A549 (cell line): ENCODE measurements at regions of chr9 and their contacts with region 1.

Region 1: DNA sequence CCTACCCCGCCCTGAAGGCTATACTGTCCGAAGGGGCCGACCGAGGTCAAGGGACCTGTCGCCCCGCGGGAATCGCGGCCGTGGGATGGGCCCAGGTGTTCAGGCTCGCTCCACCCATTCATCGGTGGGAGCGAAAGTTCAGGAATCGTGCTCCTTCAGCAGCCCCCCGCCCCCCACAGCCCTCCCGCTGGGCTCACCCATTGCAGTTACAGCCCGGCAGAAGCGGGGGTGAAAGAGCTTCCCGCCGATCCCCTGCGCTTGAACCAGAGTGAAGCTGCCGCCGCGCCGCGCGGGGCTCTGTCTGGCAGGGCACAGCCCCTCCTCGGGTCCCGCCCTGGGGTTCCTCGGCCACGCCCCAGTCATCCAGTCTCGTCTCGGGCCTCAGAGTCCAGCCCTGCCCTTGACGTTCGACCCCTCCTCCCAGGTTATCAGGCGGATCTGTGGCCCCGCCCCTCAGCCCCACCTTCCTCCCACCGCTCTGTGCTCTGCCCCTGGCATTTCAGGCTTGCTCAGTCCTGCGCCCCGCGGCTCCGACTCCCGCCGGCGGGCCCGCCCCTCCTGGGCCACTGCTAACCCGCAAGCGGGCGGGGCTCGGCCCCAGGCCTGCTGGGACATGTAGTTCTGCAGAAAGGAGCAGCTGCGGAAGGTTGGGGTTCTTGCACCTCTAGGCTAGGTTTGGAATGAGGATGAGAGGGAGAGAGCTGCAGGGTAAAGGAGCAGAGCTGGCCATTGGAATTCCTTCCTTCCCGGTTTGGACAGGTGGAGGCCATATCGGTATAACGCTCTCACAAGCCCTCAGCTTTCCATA is at the start of gene MYORG:
- DNase-seq: peak; percentile 96 to 98
- ATAC-seq: peak; percentile 78 to 89
- H3K4me3 ChIP-seq: peak within 1 kb of the TSS; percentile 79
- H3K27ac ChIP-seq: peak within 1 kb of the TSS; percentile 63 to 85
- H3K4me1 ChIP-seq: peaks cover 30% of the 10 kb centered on the region
- CTCF ChIP-seq: no peak
- EP300 ChIP-seq: no peak
- POLR2A ChIP-seq: peak; percentile 50
- RAD21 ChIP-seq: no peak
- polyA plus RNA-seq, gene MYORG: 2.2 and 3.7 TPM in 2 replicates

Region 2: DNA sequence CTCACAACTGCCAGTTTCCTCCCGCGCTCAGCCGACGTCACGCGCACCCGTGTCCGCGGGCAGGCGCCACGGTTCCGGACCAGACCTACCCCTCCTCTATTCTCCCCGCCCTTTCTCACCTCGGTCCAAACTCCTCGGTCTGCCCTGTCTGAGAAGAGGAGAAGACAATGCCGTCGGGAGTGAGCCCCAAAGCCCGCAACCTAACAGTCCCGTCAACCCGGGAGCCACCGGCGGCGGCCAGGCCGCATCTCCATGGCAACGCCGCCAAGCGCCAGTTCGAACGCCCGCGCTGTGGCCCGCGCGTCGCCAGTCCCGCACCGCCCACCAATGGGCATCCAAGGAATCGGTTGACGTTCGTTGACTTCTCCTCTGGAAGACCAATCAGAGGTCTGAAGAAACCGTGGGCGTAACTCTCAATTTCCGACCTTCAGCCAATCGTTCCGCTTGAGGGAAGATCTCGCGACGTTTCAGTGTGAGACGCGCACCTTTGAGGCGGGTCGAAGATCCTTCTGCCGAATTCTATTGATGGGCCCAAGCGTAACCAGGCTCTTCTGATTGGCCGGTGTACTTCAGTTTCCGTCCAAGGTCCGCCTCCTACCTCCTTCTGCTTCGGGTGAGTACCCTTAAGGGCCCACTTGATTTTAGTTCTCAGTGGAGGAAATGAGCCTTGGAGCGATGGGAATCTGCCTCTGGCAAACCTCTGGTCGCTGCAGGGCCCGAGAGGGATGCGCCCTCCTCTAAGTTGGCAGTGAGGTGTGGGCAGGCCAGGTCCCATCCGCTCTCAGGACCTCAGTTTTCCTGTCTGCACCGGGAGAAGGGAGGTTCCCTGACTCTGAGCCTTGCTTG is 47.6 kb before region 1 on chr9 and contains the starts of genes KIF24 and NUDT2:
- CTCF ChIA-PET with region 1: interaction called, 417 read pairs
- POLR2A ChIA-PET with region 1: interaction called, 5 read pairs
- DNase-seq: peak; percentile 96 to 100
- ATAC-seq: peak; percentile 94 to 97
- H3K4me3 ChIP-seq: peak within 1 kb of the TSS; percentile 97
- H3K27ac ChIP-seq: peak within 1 kb of the TSS; percentile 92 to 95
- H3K4me1 ChIP-seq: peaks cover 20% of the 10 kb centered on the region
- CTCF ChIP-seq: no peak
- EP300 ChIP-seq: no peak
- POLR2A ChIP-seq: peak; percentile 77
- RAD21 ChIP-seq: no peak
- polyA plus RNA-seq, gene KIF24: 4.3 and 4.4 TPM in 2 replicates
- polyA plus RNA-seq, gene NUDT2: 26.4 and 26.8 TPM in 2 replicates

Region 3: GRCh38 chr9:34363619-34364351 is 13.0 kb before region 1 on chr9:
- CTCF ChIA-PET with region 1: interaction called, 106 read pairs
- POLR2A ChIA-PET with region 1: interaction called, 4 read pairs
- DNase-seq: no peak
- ATAC-seq: no peak
- H3K4me3 ChIP-seq: no peak overlapping the region
- H3K27ac ChIP-seq: no peak overlapping the region
- H3K4me1 ChIP-seq: no peaks in the 10 kb centered on the region
- CTCF ChIP-seq: no peak
- EP300 ChIP-seq: no peak
- POLR2A ChIP-seq: no peak
- RAD21 ChIP-seq: no peak

Region 4: DNA sequence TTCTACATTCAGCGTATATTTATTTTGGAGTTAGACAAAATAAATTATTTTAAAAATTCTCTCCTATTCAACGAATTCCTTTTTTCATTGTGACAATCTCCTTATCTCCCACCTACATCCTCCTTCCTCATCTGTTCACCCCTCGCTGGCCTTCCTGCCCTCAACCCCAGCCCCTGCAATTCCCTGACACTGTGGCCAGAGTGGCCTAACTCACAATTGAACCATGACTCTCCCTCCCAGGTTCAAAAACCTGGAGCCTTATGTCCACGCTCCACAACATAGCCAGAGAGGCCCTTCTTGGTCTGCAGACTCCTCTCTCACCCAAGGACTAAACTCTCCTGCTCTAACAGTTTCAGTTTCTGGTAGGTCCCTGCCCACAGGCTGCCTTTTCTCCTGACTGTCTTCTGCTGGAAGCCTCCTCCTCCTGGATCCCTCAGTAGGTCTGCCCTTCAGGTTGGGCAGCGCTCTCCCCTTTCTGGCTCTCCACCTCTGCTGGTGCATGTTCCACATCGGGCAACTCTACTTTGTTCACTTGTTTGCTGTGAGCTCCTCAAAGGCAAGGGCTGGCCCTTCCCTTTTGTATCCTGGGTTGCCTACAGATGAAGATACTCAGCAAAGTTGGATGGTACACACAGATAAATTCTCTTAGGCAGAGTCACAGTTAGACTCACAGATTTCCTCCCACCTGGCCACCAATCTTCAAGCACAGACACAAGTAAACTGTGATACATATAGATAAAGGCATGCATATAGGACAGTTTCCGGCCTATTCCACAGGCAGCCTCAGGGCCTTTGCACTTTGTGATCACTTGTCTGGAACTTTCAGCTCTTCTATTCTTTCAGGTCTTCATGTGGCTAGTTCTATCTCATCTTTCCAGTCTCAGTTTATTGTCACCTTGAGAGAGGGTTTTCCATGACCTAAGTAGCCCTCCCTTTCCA is 19.7 kb after region 1 on chr9:
- CTCF ChIA-PET with region 1: interaction called, 12 read pairs
- POLR2A ChIA-PET with region 1: no interaction called
- DNase-seq: no peak
- ATAC-seq: no peak
- H3K4me3 ChIP-seq: no peak overlapping the region
- H3K27ac ChIP-seq: no peak overlapping the region
- H3K4me1 ChIP-seq: no peaks in the 10 kb centered on the region
- CTCF ChIP-seq: no peak
- EP300 ChIP-seq: no peak
- POLR2A ChIP-seq: no peak
- RAD21 ChIP-seq: no peak